MCF 10A (cell line): ENCODE measurements at regions of chr17 and their contacts with region 1.

Region 1: GRCh38 chr17:956905-957304 is 22.7 kb downstream of the NXN start:
- DNase-seq: peak; percentile 76
- H3K4me3 Mint-ChIP-seq: no peak overlapping the region
- H3K27ac Mint-ChIP-seq: peak overlapping the region; percentile 35
- H3K4me1 Mint-ChIP-seq: peaks cover 6% of the 10 kb centered on the region
- H3K27me3 Mint-ChIP-seq: no peaks in the 10 kb centered on the region
- CTCF ChIP-seq: no peak

Region 2: GRCh38 chr17:973053-973452 is 16.1 kb after region 1 on chr17:
- CTCF ChIA-PET with region 1: interaction called, 6 read pairs
- POLR2A ChIA-PET with region 1: interaction called, 22 read pairs
- intact Hi-C with region 1: no loop called
- DNase-seq: peak; percentile 32
- H3K4me3 Mint-ChIP-seq: peak overlapping the region; percentile 58
- H3K27ac Mint-ChIP-seq: peak overlapping the region; percentile 65
- H3K4me1 Mint-ChIP-seq: peaks cover 11% of the 10 kb centered on the region
- H3K27me3 Mint-ChIP-seq: no peaks in the 10 kb centered on the region
- CTCF ChIP-seq: no peak

Region 3: DNA sequence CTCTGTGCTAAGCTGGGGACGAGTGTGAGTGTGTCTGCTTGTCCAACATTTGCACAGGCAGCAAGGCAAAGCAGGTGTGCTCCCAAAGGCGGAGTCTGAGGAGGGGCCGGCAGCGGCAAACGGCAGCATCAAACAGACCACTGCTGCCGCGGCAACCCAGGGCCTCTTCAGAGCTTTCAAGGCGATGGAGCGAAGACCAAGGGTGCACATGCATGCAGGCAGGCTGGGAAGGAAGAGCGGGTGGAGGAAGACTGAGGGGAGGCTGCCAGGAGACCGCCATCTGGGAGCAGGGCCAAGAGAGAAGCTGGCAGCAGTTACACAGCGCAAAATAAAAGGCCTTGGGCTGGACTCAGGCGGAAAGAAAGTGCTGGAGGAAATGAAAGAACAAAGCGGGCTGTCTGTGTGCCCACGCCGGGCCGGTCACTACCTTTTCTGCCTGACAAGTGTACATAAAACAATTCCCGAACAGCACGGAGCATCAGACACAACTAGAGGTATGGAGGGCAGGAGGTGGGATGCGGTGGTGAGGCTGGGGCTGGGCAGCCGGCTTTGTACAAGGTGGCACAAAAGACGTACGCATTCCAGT is 48.5 kb after region 1 on chr17:
- CTCF ChIA-PET with region 1: no interaction called
- POLR2A ChIA-PET with region 1: no interaction called
- intact Hi-C with region 1: no loop called
- DNase-seq: no peak
- H3K4me3 Mint-ChIP-seq: peak overlapping the region; percentile 49
- H3K27ac Mint-ChIP-seq: no peak overlapping the region
- H3K4me1 Mint-ChIP-seq: peaks cover 16% of the 10 kb centered on the region
- H3K27me3 Mint-ChIP-seq: no peaks in the 10 kb centered on the region
- CTCF ChIP-seq: no peak